ENCODE measurements at regions of chr18 and their contacts with region 1.

Region 1: DNA sequence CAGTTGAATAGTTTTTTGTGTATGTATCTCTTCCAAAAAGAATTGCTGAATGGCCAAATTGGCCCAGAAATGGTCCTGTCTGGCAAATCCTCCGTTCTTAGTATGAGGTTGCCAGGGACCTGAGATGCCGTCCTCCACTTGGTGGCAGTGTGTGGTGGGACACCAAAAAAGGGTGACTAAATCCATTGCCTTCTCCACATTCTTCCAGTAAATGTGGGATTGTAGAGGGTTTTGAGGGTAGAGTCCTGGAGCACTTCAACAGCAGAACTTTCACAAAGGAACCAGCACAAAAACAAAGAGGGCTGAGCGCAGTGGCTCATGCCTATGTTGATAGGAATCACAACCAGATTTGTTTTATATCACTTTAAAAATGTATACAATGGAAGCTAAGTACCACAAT is 199.9 kb downstream of the BCL2 start:
- DNase-seq: peak; percentile 31
- ATAC-seq: peak; percentile 92
- H3K4me3 ChIP-seq: no peak overlapping the region
- H3K27ac ChIP-seq: no peak overlapping the region
- H3K4me1 ChIP-seq: no peaks in the 10 kb centered on the region
- H3K27me3 ChIP-seq: peaks cover 6% of the 10 kb centered on the region; the same call in 1 of the 2 replicates
- CTCF ChIP-seq: peak; percentile 43 to 66 (median 53); a peak in 4 of 6 replicates
- POLR2A ChIP-seq: no peak
- RAD21 ChIP-seq: peak; percentile 66

Region 2: DNA sequence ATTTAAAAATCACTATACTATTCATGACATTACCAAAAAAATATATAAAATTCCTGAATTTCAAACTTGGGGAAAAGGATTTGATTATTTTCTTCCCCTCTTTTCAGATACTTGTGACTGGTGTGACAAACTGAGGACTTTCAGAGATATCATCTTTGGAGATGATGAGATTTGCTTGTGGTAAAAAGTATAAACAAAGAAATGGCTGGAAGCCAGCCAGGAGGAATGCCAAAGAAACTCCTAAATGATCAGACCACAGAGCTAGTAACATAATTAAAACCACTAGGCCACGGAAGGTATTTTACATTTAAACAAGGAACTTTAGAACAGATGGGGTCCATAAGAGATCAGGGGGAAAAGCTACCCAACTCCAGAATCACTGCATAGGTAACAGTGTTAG is 991.5 kb before region 1 on chr18:
- CTCF ChIA-PET with region 1: no interaction called
- POLR2A ChIA-PET with region 1: no interaction called
- RAD21 ChIA-PET with region 1: no interaction called
- intact Hi-C with region 1: no loop called
- DNase-seq: no peak
- ATAC-seq: no peak
- H3K4me3 ChIP-seq: no peak overlapping the region
- H3K27ac ChIP-seq: no peak overlapping the region
- H3K4me1 ChIP-seq: no peaks in the 10 kb centered on the region
- H3K27me3 ChIP-seq: no peaks in the 10 kb centered on the region
- CTCF ChIP-seq: no peak
- POLR2A ChIP-seq: no peak
- RAD21 ChIP-seq: no peak

Region 3: GRCh38 chr18:63131106-63131958 is 11.7 kb after region 1 on chr18:
- CTCF ChIA-PET with region 1: interaction called, 11 read pairs
- POLR2A ChIA-PET with region 1: no interaction called
- RAD21 ChIA-PET with region 1: no interaction called
- intact Hi-C with region 1: no loop called
- DNase-seq: no peak
- ATAC-seq: peak; percentile 77
- H3K4me3 ChIP-seq: no peak overlapping the region
- H3K27ac ChIP-seq: no peak overlapping the region
- H3K4me1 ChIP-seq: no peaks in the 10 kb centered on the region
- H3K27me3 ChIP-seq: peaks cover 4% of the 10 kb centered on the region; the same call in 1 of the 2 replicates
- CTCF ChIP-seq: peak; percentile 42 to 62 (median 52)
- POLR2A ChIP-seq: no peak
- RAD21 ChIP-seq: peak; percentile 65

Region 4: GRCh38 chr18:63339920-63340484 is 220.4 kb after region 1 on chr18:
- CTCF ChIA-PET with region 1: interaction called, 4 read pairs
- POLR2A ChIA-PET with region 1: no interaction called
- RAD21 ChIA-PET with region 1: no interaction called
- intact Hi-C with region 1: loop called (anchors 5 kb)
- DNase-seq: peak; percentile 10
- ATAC-seq: peak; percentile 57; the same call in 1 of the 2 replicates
- H3K4me3 ChIP-seq: no peak overlapping the region
- H3K27ac ChIP-seq: no peak overlapping the region
- H3K4me1 ChIP-seq: peaks cover 10 to 15% of the 10 kb centered on the region in 2 experiments
- H3K27me3 ChIP-seq: no peaks in the 10 kb centered on the region
- CTCF ChIP-seq: peak; percentile 29 to 78 (median 68); a peak in 5 of 6 replicates
- POLR2A ChIP-seq: no peak
- RAD21 ChIP-seq: peak; percentile 41; the same call in 1 of the 2 replicates